Activated naive CD4-positive, alpha-beta T cell treated with anti-CD3 and anti-CD28 coated beads for 36 hours (primary cell): ENCODE measurements at regions of chr6 and their contacts with region 1.

Region 1: GRCh38 chr6:158869826-158870648 is 50.9 kb upstream of the EZR start:
- DNase-seq: peak; percentile 96
- H3K4me3 Mint-ChIP-seq: peak overlapping the region; percentile 88
- H3K27ac Mint-ChIP-seq: peak overlapping the region; percentile 99
- H3K4me1 Mint-ChIP-seq: peaks cover 35% of the 10 kb centered on the region
- H3K27me3 Mint-ChIP-seq: no peaks in the 10 kb centered on the region

Region 2: GRCh38 chr6:158718461-158719046 is 151.5 kb before region 1 on chr6:
- CTCF ChIA-PET with region 1: no interaction called
- intact Hi-C with region 1: loop called (anchors 5 kb)
- DNase-seq: no peak
- H3K4me3 Mint-ChIP-seq: no peak overlapping the region
- H3K27ac Mint-ChIP-seq: no peak overlapping the region
- H3K4me1 Mint-ChIP-seq: peaks cover 37% of the 10 kb centered on the region
- H3K27me3 Mint-ChIP-seq: no peaks in the 10 kb centered on the region

Region 3: GRCh38 chr6:158853072-158853871 is 16.8 kb before region 1 on chr6:
- CTCF ChIA-PET with region 1: interaction called, 12 read pairs
- intact Hi-C with region 1: loop called (anchors 1 kb)
- DNase-seq: peak; percentile 95
- H3K4me3 Mint-ChIP-seq: no peak overlapping the region
- H3K27ac Mint-ChIP-seq: no peak overlapping the region
- H3K4me1 Mint-ChIP-seq: peaks cover 29% of the 10 kb centered on the region
- H3K27me3 Mint-ChIP-seq: no peaks in the 10 kb centered on the region

Region 4: DNA sequence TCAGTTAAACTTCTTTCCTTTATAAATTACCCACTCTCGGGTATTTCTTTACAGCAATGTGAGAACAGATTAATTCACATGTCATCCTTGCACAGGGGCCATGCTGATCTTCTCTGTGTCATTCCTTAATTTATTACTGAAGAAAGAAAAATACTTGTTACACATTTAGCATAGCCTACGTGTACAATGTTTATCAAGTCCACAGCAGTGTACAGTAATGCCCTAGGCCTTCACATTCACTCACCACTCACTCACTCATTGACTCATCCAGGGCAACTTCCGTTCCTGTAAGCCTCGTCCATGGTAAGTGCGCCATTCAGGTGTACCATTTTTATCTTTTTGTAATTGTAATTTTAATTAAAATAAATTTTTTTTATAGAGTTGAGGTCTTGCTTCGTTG is 56.4 kb after region 1 on chr6:
- CTCF ChIA-PET with region 1: no interaction called
- intact Hi-C with region 1: no loop called
- DNase-seq: no peak
- H3K4me3 Mint-ChIP-seq: no peak overlapping the region
- H3K27ac Mint-ChIP-seq: no peak overlapping the region
- H3K4me1 Mint-ChIP-seq: no peaks in the 10 kb centered on the region
- H3K27me3 Mint-ChIP-seq: no peaks in the 10 kb centered on the region

Region 5: DNA sequence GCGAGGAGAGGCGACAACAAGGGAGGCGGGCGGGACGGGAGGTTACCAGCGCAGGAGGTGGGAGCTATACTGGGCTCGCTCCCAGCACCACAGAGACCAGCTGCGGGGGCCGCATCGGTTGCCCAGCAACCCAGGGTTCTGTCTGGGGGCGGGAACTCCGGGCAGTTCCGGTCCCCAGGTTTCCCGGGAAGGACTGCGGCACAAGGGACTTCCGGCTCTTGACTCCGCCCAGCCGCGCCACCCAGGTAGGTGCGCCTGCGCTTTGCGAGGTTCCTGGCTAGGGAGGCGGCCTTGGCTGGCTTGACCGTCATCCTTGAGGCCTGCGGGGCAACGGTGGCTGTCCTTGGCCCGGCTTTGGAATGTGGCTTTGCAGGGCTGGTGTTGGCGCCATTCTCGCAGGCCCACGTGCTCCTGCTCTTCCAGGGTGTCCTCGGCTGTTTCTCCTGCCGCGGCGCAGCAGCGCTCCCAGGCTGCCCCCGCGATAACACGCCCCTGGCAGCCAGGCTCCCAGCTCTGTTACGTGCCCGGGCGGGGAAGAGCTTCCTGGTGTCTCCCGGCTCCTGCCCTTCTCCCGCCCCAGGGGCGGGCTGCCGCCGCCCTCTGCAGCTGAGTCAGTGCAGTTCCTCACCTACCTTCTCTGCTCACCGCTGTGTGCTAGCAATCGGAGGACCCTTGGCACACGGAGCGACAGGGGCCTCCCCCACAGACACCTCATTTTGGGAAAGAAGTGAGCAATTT is 129.8 kb after region 1 on chr6 and contains the start of gene RSPH3:
- CTCF ChIA-PET with region 1: no interaction called
- intact Hi-C with region 1: loop called (anchors 1 kb)
- DNase-seq: peak; percentile 94
- H3K4me3 Mint-ChIP-seq: peak within 1 kb of the TSS; percentile 98
- H3K27ac Mint-ChIP-seq: peak within 1 kb of the TSS; percentile 82
- H3K4me1 Mint-ChIP-seq: peaks cover 45% of the 10 kb centered on the region
- H3K27me3 Mint-ChIP-seq: no peaks in the 10 kb centered on the region
- total RNA-seq, gene RSPH3: 3.0 to 3.2 TPM

Region 6: GRCh38 chr6:159062564-159062945 is 192.5 kb after region 1 on chr6:
- CTCF ChIA-PET with region 1: no interaction called
- intact Hi-C with region 1: loop called (anchors 1 kb)
- DNase-seq: peak; percentile 77
- H3K4me3 Mint-ChIP-seq: peak overlapping the region; percentile 6
- H3K27ac Mint-ChIP-seq: peak overlapping the region; percentile 91
- H3K4me1 Mint-ChIP-seq: peaks cover 95% of the 10 kb centered on the region
- H3K27me3 Mint-ChIP-seq: no peaks in the 10 kb centered on the region